ENCODE measurements at regions of chr4 and their contacts with region 1.

Region 1: DNA sequence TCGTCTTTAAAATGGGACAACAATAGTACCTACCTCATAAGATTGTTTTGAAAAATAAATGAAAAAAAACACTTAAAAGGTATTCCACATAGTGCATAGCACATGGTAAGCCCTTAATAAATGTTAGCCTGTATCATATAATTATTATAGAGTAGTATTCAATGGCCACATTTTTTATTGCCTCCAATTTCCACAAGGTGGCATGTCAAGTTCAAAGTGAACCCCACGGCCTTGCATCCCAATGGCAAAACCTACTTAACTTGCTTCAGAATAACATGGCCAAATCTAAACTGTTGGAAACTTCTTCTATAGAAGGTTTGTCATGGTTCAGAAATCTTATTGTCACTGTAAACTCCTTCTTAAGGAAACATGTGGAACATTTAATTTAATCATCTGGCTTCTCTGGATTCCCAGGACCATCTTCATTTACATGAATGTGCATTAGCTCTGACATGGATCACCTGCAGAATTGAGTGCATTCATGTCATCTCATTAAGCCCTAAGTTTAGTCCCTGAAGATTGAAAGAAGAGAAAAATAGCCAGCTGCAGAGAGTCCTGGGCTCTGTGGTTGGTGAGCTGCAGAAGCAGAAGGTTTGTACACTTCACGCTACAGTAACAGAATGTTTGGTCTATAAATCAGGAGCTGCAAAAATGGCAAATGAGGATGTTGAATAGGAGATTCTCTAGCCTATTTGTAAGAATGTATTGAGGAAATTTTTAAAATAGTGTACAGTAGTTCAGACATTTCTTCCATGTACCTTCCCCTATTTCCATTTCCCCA is 61.0 kb downstream of the ANXA3 start:
- DNase-seq: peak; percentile 26 to 67 (median 38)
- H3K4me3 ChIP-seq: no peak overlapping the region
- H3K27ac ChIP-seq: no peak overlapping the region
- H3K4me1 ChIP-seq: peaks cover 0 to 7% of the 10 kb centered on the region in 2 donors
- H3K27me3 ChIP-seq: no peaks in the 10 kb centered on the region
- CTCF ChIP-seq: peak; percentile 46 to 80 (median 70)
- POLR2A ChIP-seq: no peak

Region 2: GRCh38 chr4:77728420-77728819 is 884.2 kb before region 1 on chr4:
- intact Hi-C with region 1: no loop called
- DNase-seq: no peak
- H3K4me3 ChIP-seq: no peak overlapping the region
- H3K27ac ChIP-seq: no peak overlapping the region
- H3K4me1 ChIP-seq: peaks cover 0 to 4% of the 10 kb centered on the region in 2 donors
- H3K27me3 ChIP-seq: no peaks in the 10 kb centered on the region
- CTCF ChIP-seq: peak in 1 of 6 experiments; percentile 6
- POLR2A ChIP-seq: no peak

Region 3: GRCh38 chr4:78864405-78865024 is 251.9 kb after region 1 on chr4:
- intact Hi-C with region 1: loop called (anchors 2 to 10 kb)
- DNase-seq: peak in 3 of 7 donors; percentile 15 to 35 (median 23)
- H3K4me3 ChIP-seq: no peak overlapping the region
- H3K27ac ChIP-seq: no peak overlapping the region
- H3K4me1 ChIP-seq: no peaks in the 10 kb centered on the region
- H3K27me3 ChIP-seq: no peaks in the 10 kb centered on the region
- CTCF ChIP-seq: peak; percentile 54 to 91 (median 80)
- POLR2A ChIP-seq: no peak

Measured in adrenal gland (tissue), 19 donors.